Mammary epithelial cell (primary cell): ENCODE measurements at regions of chr6 and their contacts with region 1.

Region 1: DNA sequence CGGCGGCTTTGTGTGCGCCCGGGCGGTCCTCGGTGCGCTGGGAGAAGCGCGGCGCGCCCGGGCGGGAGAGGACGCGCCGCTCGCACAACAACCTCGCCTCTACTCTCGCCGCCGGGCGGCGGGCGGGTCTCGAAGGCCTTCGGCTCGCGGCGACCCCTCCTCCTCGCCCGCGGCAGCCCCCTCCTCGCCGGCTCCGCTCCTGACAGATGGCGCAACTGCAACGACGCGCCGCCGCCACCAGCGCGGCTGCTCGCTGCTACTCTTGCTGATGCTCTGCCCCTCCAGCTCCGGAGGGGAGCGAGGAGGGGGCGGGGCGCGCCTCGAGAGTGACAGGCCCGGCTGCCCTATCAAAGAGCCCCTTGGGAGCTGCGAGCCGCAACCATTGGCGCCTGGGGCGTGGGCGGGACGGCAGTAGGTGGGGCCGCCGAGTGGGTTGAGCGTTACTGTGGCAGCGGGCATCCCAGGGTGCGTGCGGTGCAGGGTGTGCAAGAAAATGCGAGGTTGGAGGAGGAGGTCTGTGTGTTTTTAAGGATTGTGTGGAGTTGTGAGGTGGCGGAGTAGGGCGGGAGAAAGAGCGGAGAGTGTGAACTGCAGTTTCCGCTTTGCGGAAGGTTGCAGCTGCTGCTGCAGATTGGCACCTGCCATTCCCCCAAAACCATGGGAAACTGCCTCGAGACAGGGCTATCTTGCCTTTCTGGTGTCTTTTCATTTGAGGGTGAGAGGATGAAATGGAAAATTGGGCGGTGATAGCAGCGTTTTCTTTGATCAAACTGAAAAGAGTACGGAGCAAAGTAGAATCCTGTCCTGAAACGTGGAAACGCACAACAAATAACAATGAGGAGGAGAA is at the start of gene FYN:
- DNase-seq: peak; percentile 96
- H3K4me3 ChIP-seq: peak within 1 kb of the TSS; percentile 65 to 88 (median 78)
- H3K27ac ChIP-seq: peak within 1 kb of the TSS; percentile 31
- H3K4me1 ChIP-seq: peaks cover 15% of the 10 kb centered on the region
- H3K27me3 ChIP-seq: no peaks in the 10 kb centered on the region
- CTCF ChIP-seq: peak; percentile 29 to 46
- total RNA-seq, gene FYN: 58.0 to 136 TPM

Region 2: GRCh38 chr6:111709615-111710398 is 163.6 kb before region 1 on chr6:
- CTCF ChIA-PET with region 1: no interaction called
- dilution Hi-C with region 1: no loop called
- in situ Hi-C with region 1: no loop called
- intact Hi-C with region 1: loop called (anchors 1 kb)
- DNase-seq: peak; percentile 54
- H3K4me3 ChIP-seq: peak overlapping the region in 2 of 3 experiments; percentile 11 to 22
- H3K27ac ChIP-seq: peak overlapping the region; percentile 28
- H3K4me1 ChIP-seq: peaks cover 8% of the 10 kb centered on the region
- H3K27me3 ChIP-seq: no peaks in the 10 kb centered on the region
- CTCF ChIP-seq: peak; percentile 56 to 61

Region 3: DNA sequence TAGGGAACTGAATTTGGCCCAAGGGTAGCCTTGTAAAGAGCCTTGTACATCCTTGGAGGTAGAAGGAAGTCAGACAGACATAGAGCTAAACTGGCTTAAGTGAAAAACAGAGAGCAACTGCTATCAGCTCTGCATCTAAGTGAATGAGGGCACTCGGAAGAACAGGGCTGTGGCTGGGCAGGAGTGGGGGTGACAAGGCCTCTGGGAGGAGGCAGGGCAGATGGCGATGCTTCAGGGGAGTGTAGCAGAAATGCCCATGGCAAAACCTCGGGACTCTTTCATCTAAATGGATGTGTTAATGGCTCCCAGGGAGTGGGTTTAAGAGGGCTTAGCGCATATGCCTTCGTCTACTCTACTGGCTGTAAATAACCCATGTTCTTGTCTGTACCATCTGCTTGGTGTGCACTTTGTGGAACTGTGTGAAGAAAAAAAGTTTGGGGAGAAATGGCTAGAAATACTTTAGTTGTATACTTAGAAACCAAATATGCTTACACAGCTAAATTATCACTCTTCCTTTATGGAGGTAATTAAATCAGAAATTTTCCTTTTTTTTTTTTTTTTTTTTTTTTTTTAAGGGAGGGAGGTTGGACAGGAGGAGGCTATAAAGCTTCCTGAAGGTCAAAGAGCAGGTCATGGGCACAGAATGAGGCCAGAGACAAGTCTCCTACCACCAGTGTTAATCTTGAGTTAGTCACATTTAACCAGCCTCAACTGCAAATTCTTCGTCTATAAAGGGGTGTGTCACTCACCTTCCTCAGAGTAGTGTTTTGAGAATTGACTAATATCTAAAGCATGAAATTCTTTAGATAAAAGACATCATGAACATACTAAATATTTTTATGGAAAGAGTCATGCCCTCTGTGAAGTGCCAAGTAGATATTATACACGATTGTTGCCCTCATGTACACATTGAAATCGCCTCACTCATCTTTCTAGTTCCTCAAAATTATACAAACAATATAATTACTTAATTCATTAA is 61.1 kb before region 1 on chr6:
- CTCF ChIA-PET with region 1: no interaction called
- dilution Hi-C with region 1: no loop called
- in situ Hi-C with region 1: no loop called
- intact Hi-C with region 1: loop called (anchors 2 kb)
- DNase-seq: peak; percentile 65
- H3K4me3 ChIP-seq: no peak overlapping the region
- H3K27ac ChIP-seq: no peak overlapping the region
- H3K4me1 ChIP-seq: peaks cover 22% of the 10 kb centered on the region
- H3K27me3 ChIP-seq: no peaks in the 10 kb centered on the region
- CTCF ChIP-seq: no peak

Region 4: GRCh38 chr6:111952821-111953540 is 79.6 kb after region 1 on chr6:
- CTCF ChIA-PET with region 1: no interaction called
- dilution Hi-C with region 1: no loop called
- in situ Hi-C with region 1: no loop called
- intact Hi-C with region 1: loop called (anchors 1 kb)
- DNase-seq: peak; percentile 70
- H3K4me3 ChIP-seq: no peak overlapping the region
- H3K27ac ChIP-seq: peak overlapping the region; percentile 39
- H3K4me1 ChIP-seq: peaks cover 16% of the 10 kb centered on the region
- H3K27me3 ChIP-seq: no peaks in the 10 kb centered on the region
- CTCF ChIP-seq: no peak

Region 5: DNA sequence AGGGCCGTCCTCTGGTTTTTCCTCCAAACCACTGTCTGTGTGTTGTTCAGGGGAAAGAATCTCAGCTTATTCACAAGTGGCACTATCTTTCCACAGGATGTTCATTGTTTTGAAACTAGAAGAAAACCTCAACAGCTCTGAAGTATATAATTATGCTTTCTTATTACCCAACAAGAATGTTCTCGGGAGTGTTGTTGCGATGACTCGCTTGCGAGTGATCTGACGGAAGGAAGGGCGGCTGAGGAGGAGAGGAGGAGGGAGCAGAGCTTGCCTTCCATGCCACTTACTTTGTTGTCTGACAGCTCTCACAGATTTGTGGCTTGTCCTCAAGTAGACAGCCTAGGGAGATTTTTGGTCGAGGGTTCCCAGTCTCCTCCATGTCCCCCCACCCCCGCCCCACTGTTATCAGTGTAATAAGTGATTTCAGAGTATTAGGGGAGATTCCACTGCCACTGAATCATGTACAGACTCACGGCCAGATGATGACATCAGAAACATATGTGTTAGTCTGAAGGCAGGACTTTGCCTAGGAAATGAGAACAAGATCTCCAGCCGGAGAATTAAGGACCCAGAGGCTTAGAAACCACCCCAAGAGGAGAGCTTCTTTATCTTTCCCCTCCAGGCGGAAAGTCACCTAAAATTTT is 99.8 kb after region 1 on chr6:
- CTCF ChIA-PET with region 1: interaction called, 4 read pairs
- dilution Hi-C with region 1: no loop called
- in situ Hi-C with region 1: no loop called
- intact Hi-C with region 1: loop called (anchors 1 kb)
- DNase-seq: peak; percentile 93
- H3K4me3 ChIP-seq: peak overlapping the region in 2 of 3 experiments; percentile 8 to 19
- H3K27ac ChIP-seq: peak overlapping the region; percentile 99
- H3K4me1 ChIP-seq: peaks cover 31% of the 10 kb centered on the region
- H3K27me3 ChIP-seq: no peaks in the 10 kb centered on the region
- CTCF ChIP-seq: no peak